Activated CD4-positive, alpha-beta T cell treated with anti-CD3 and anti-CD28 coated beads for 36 hours (primary cell): ENCODE measurements at regions of chr3 and their contacts with region 1.

Region 1: DNA sequence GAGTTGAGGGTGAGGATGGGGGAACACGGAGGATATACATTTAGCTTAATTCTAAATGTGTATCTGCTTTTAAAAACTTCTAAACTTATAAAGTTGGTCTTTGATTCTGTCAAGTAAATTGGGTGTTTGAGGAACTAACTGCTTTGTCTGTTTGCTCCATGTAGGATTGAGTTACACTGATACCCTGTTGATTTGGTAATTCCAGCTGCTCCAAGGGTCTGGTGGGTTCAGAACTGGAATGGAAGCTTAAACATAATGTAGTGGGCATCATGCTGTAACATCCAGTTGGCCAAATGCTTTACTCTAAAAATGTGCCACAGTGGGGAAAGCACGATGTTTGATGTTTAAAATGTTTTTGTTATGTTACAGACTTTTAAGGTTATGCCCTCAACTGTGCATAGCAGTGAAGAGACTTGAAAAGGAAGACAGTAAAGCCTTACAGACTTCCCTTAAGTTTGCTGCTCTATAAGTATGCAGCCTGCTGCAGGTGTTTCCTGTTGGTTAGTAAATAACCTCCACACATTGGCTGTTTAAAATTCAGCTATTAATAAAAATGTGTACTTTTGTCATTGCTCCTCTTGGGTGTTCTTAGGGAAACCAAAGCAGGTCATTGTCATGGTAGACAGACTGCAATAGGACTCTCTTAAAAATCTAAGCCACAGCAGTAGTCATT is 5.9 kb upstream of the EDEM1 start:
- DNase-seq: no peak
- ATAC-seq: no peak
- H3K4me3 Mint-ChIP-seq: no peak overlapping the region
- H3K27ac Mint-ChIP-seq: peak overlapping the region; percentile 28
- H3K4me1 Mint-ChIP-seq: peaks cover 11% of the 10 kb centered on the region
- H3K27me3 Mint-ChIP-seq: no peaks in the 10 kb centered on the region

Region 2: GRCh38 chr3:4113811-4114522 is 1067.6 kb before region 1 on chr3:
- CTCF ChIA-PET with region 1: no interaction called
- POLR2A ChIA-PET with region 1: no interaction called
- intact Hi-C with region 1: no loop called
- DNase-seq: no peak
- ATAC-seq: no peak
- H3K4me3 Mint-ChIP-seq: no peak overlapping the region
- H3K27ac Mint-ChIP-seq: no peak overlapping the region
- H3K4me1 Mint-ChIP-seq: no peaks in the 10 kb centered on the region
- H3K27me3 Mint-ChIP-seq: no peaks in the 10 kb centered on the region

Region 3: GRCh38 chr3:5165698-5166097 is 15.9 kb before region 1 on chr3:
- CTCF ChIA-PET with region 1: interaction called, 8 read pairs
- POLR2A ChIA-PET with region 1: no interaction called
- intact Hi-C with region 1: loop called in 1 of 2 experiments (anchors 2 kb)
- DNase-seq: no peak
- ATAC-seq: no peak
- H3K4me3 Mint-ChIP-seq: no peak overlapping the region
- H3K27ac Mint-ChIP-seq: peak overlapping the region; percentile 29
- H3K4me1 Mint-ChIP-seq: peaks cover 60% of the 10 kb centered on the region
- H3K27me3 Mint-ChIP-seq: no peaks in the 10 kb centered on the region